Head of caudate nucleus (tissue), 42 donors: ENCODE measurements at regions of chr11 and their contacts with region 1.

Region 1: DNA sequence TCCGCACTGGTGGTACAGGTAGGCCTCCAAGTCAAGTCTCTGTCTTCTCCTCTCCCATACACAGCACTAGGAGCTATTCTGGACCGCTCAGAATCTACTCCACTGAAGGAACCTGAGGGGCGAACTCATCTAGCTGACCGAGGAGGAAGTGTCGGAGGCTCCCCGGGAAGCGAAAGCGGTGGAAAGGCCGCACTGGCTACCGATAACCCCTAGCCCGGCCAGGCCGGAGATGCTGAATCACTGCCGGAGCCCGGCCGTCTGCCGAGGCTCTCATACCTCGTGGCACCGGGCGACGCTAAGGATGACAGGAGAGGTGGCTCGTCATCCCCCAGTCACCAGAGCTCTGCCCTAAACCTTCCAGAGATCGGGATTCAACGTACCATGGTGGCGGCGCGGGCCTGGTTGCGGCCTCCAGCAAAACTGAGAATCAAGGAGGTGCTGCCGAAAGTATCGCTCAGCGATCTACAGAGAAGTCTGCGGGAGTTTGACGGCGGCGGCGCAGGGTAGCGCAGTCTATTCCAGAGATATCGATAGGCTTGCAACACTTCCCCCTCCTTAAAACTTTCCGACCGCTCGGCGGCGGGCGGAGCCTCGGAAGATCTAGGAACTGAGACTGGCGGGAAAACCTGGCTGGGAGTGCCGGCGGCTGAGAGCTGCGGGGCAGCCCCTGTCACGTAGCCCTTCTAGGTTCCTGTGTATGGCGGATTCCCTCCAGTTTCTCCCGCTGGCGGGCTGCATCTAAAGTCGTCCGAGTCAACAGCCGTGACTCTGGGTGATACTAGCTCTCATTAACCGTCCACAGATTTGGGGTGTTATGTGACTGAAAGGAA is at the start of gene PSMA1:
- DNase-seq: peak; percentile 87 to 98 (median 94)

Region 2: GRCh38 chr11:14059491-14059890 is 460.6 kb before region 1 on chr11:
- intact Hi-C with region 1: no loop called
- DNase-seq: peak in 21 of 42 donors; percentile 12 to 74 (median 32)

Region 3: GRCh38 chr11:14499554-14500180 is 20.5 kb before region 1 on chr11 and contains the start of gene COPB1:
- intact Hi-C with region 1: loop called (anchors 2 kb)
- DNase-seq: peak; percentile 88 to 97 (median 94)

Region 4: DNA sequence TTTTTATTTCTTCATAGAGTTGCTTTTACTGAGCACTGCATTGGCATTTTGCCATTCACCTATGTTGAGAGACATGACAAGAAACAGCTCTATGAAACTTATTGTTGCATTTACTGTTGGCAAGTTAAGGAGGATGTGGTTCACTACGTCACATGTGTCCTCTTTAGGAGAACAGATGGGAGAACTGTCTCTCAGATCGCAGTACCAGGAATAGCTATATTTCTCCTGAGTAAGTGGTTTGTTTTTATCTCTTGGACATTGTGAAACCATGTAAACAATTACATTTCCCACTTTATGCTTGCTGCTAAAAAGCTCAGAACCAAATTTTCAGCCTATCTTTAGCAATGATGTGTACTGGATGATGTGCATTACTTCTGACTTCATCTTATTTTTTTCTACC is 34.8 kb after region 1 on chr11:
- intact Hi-C with region 1: no loop called
- DNase-seq: peak in 2 of 42 donors; percentile 19 to 35

Region 5: GRCh38 chr11:14927146-14927545 is 407.0 kb after region 1 on chr11:
- intact Hi-C with region 1: no loop called
- DNase-seq: no peak